CD4-positive, alpha-beta T cell (primary cell): ENCODE measurements at regions of chr12 and their contacts with region 1.

Region 1: DNA sequence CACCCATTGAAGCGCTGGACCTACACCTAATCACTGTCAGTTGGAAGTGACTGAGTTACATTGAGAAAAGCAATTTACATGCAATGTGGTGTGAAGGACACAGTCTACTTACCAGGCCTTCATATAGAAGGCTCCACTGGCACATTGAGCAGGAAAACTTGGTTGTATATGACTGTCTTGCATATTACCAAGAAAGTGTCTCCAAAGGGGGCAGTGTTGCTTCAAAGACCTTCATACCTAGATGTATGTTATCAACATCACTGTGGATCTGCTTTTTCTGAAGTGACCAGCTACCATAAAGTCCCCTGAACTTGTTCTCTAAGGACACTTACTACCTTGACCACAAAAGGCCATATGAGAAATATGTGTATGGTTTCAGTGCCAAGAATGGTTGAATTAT is 64.1 kb downstream of the NELL2 start:
- DNase-seq: peak in 10 of 14 experiments; percentile 14 to 81 (median 38)
- ATAC-seq: peak; percentile 86
- H3K4me3 ChIP-seq: no peak overlapping the region
- H3K4me3 Mint-ChIP-seq: no peak overlapping the region
- H3K27ac ChIP-seq: no peak overlapping the region
- H3K27ac Mint-ChIP-seq: no peak overlapping the region
- H3K4me1 ChIP-seq: peaks cover 7% of the 10 kb centered on the region
- H3K4me1 Mint-ChIP-seq: peaks cover 47% of the 10 kb centered on the region
- H3K27me3 ChIP-seq: no peaks in the 10 kb centered on the region
- H3K27me3 Mint-ChIP-seq: no peaks in the 10 kb centered on the region
- CTCF ChIP-seq: peak; percentile 68

Region 2: GRCh38 chr12:44774815-44775411 is 37.1 kb before region 1 on chr12:
- CTCF ChIA-PET with region 1: interaction called, 8 read pairs
- POLR2A ChIA-PET with region 1: no interaction called
- intact Hi-C with region 1: loop called (anchors 5 kb)
- DNase-seq: peak; percentile 43 to 78 (median 56)
- ATAC-seq: no peak
- H3K4me3 ChIP-seq: no peak overlapping the region
- H3K4me3 Mint-ChIP-seq: no peak overlapping the region
- H3K27ac ChIP-seq: no peak overlapping the region
- H3K27ac Mint-ChIP-seq: no peak overlapping the region
- H3K4me1 ChIP-seq: no peaks in the 10 kb centered on the region
- H3K4me1 Mint-ChIP-seq: peaks cover 4% of the 10 kb centered on the region
- H3K27me3 ChIP-seq: no peaks in the 10 kb centered on the region
- H3K27me3 Mint-ChIP-seq: no peaks in the 10 kb centered on the region
- CTCF ChIP-seq: peak; percentile 91